ENCODE measurements at regions of chr2 and their contacts with region 1.

Region 1: GRCh38 chr2:163778044-163778781 is 42.4 kb upstream of the FIGN start:
- DNase-seq: no peak
- H3K4me3 ChIP-seq: no peak overlapping the region
- H3K4me3 Mint-ChIP-seq: no peak overlapping the region
- H3K27ac Mint-ChIP-seq: no peak overlapping the region
- H3K4me1 ChIP-seq: 0 out of 2 replicates have a peak, but pooled peaks cover 4% of the 10 kb centered on the region
- H3K4me1 Mint-ChIP-seq: peaks cover 6% of the 10 kb centered on the region
- H3K27me3 ChIP-seq: no peaks in the 10 kb centered on the region
- H3K27me3 Mint-ChIP-seq: no peaks in the 10 kb centered on the region
- CTCF ChIP-seq: no peak

Region 2: GRCh38 chr2:163794635-163795034 is 16.4 kb after region 1 on chr2:
- CTCF ChIA-PET with region 1: no interaction called
- POLR2A ChIA-PET with region 1: no interaction called
- intact Hi-C with region 1: loop called (anchors 1 kb)
- DNase-seq: no peak
- H3K4me3 ChIP-seq: no peak overlapping the region
- H3K4me3 Mint-ChIP-seq: no peak overlapping the region
- H3K27ac Mint-ChIP-seq: no peak overlapping the region
- H3K4me1 ChIP-seq: no peaks in the 10 kb centered on the region
- H3K4me1 Mint-ChIP-seq: peaks cover 6% of the 10 kb centered on the region
- H3K27me3 ChIP-seq: no peaks in the 10 kb centered on the region
- H3K27me3 Mint-ChIP-seq: no peaks in the 10 kb centered on the region
- CTCF ChIP-seq: no peak